Motor neuron (in vitro differentiated cells): ENCODE measurements at regions of chr1 and their contacts with region 1.

Region 1: DNA sequence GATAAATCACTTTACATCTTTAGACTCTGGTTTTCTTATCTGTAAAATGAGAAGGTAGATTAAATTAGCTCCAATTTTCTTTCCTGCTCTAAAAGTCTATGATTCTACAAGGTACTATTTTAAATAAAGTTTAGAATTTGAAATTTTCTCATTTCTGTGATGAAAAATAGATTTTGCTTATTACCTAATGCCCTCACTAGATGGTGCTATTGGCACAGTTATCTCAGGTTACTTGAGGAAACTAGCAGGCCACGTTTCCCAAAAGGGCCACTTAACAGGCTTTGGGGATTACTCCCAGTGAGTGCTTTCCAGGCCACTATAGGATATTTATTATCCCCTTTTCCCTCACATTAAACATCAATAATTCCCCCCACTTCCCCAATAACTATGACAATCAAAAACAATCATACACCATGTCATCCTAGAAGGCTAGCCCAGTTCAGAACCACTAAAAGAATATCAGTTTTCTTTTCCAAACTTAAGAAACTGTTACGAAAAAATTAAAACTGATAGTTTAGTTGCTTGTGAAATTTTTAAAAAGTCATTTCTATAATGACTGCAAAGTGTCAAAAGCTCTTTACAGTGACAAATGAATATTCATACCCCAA is 30.6 kb downstream of the OMA1 start:
- ATAC-seq: peak; percentile 38 to 57 (median 48)
- H3K4me3 ChIP-seq: no peak overlapping the region
- H3K27ac ChIP-seq: no peak overlapping the region
- H3K4me1 ChIP-seq: no peaks in the 10 kb centered on the region

Region 2: GRCh38 chr1:58358346-58358745 is 157.6 kb before region 1 on chr1:
- in situ Hi-C with region 1: no loop called
- ATAC-seq: peak; percentile 21 to 97 (median 89)
- H3K4me3 ChIP-seq: no peak overlapping the region
- H3K27ac ChIP-seq: no peak overlapping the region
- H3K4me1 ChIP-seq: peaks cover 8 to 20% of the 10 kb centered on the region in 2 donors

Region 3: DNA sequence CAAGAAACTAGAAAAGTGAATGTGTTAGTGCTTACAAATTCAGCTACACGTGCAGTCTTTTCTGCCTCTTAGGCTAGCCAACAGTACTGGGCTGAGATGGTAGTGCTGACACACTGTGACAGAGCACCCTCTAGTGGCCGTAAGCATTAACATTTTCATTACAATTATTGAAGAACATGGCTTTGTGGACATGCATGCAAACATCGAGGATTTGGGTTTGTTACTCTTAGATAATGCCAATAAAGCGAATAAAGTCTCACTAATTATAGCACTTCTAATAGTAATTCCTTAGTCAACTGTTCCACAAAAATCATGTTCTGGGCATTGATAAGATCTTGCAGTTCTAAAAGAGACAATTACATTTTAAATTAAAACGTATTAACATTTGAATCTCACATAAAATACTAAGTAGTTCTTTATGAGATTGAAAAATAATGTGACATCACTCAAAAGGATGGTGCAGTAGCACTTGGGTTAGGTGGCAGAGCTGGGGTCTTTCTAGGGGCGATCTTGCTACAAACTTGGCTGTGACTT is 136.8 kb after region 1 on chr1:
- in situ Hi-C with region 1: loop called in 2 of 9 experiments (anchors 10 kb)
- ATAC-seq: peak; percentile 78 to 96 (median 90)
- H3K4me3 ChIP-seq: no peak overlapping the region
- H3K27ac ChIP-seq: no peak overlapping the region
- H3K4me1 ChIP-seq: peaks cover 17 to 19% of the 10 kb centered on the region in 2 donors

Region 4: DNA sequence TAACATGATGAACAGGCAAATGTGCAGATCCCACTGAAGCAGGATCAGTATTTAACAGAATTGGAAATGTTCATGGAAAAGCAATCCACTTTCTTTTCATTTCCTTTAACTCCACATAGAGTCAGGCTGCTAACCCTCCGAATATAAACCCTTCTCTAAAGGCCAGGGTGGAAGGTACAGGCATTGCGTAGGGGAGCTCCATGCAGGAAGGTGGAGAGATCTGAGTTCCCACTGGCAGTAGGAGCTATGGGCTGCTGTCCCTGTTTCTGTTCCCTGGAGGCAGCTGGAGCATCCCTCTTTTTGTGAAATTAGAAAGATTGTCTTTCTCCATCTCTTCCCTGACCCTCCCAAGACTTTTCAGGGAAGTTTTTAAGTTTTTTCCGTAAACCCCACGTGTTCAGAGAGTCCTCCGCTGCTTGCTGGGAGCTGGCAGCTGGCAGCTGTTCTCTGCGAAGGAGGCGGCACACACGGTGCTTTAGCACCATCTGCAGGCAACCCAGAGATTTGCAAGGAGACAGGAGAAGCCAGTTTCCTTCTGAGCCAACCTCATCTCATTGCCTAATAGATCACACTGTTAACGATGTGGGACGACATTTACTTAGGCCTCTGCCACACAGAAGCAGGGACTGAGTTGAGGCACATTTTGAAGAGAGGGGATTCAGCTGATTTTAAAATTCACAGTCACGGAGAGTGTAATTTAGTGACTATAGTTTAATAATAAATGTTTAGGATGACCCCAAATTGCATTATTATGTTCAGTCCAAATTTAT is 1243.4 kb after region 1 on chr1:
- in situ Hi-C with region 1: loop called in 2 of 9 experiments (anchors 25 kb)
- ATAC-seq: peak; percentile 90 to 94 (median 92)
- H3K4me3 ChIP-seq: no peak overlapping the region
- H3K27ac ChIP-seq: no peak overlapping the region
- H3K4me1 ChIP-seq: peaks cover 8% of the 10 kb centered on the region in 2 donors

Region 5: GRCh38 chr1:59947047-59947938 is 1431.4 kb after region 1 on chr1:
- in situ Hi-C with region 1: loop called in 1 of 9 experiments (anchors 25 kb)
- ATAC-seq: peak; percentile 84 to 98 (median 92)
- H3K4me3 ChIP-seq: no peak overlapping the region
- H3K27ac ChIP-seq: no peak overlapping the region
- H3K4me1 ChIP-seq: no peaks in the 10 kb centered on the region